ENCODE measurements at regions of chr6 and their contacts with region 1.

Region 1: GRCh38 chr6:149934249-149935156 is 7.3 kb upstream of the ULBP2 start:
- DNase-seq: peak; percentile 87
- H3K4me3 ChIP-seq: no peak overlapping the region
- H3K27ac ChIP-seq: no peak overlapping the region
- H3K4me1 ChIP-seq: no peaks in the 10 kb centered on the region
- H3K27me3 ChIP-seq: peaks cover 37% of the 10 kb centered on the region
- CTCF ChIP-seq: peak; percentile 82

Region 2: GRCh38 chr6:150016324-150017185 is 82.1 kb after region 1 on chr6:
- CTCF ChIA-PET with region 1: interaction called, 3 read pairs
- POLR2A ChIA-PET with region 1: no interaction called
- intact Hi-C with region 1: loop called (anchors 1 kb)
- DNase-seq: peak; percentile 82
- H3K4me3 ChIP-seq: no peak overlapping the region
- H3K27ac ChIP-seq: no peak overlapping the region
- H3K4me1 ChIP-seq: no peaks in the 10 kb centered on the region
- H3K27me3 ChIP-seq: peaks cover 54% of the 10 kb centered on the region
- CTCF ChIP-seq: peak; percentile 60

Region 3: DNA sequence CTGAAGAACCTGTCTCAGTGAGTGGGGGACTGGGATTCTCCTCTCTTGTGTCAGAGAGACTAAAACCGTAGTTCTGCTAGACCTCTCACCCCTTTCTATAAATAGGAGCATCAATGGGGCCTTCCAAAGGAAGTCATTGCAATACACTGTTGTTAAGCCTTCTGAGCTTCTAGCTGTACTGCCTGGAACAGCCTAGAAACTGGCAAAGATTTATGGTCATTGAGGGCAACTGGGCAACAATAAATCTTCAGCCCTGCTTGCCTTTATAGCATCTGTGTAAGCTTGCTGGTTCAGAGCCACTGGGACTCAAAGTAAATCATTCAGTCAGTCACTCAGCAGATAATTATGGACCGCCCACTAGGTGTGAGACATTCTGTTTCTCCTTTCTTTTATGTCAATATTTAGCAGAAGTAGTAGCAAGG is 261.5 kb after region 1 on chr6:
- CTCF ChIA-PET with region 1: no interaction called
- POLR2A ChIA-PET with region 1: no interaction called
- intact Hi-C with region 1: no loop called
- DNase-seq: no peak
- H3K4me3 ChIP-seq: no peak overlapping the region
- H3K27ac ChIP-seq: no peak overlapping the region
- H3K4me1 ChIP-seq: no peaks in the 10 kb centered on the region
- H3K27me3 ChIP-seq: no peaks in the 10 kb centered on the region
- CTCF ChIP-seq: no peak

Region 4: GRCh38 chr6:150320442-150320841 is 385.9 kb after region 1 on chr6:
- CTCF ChIA-PET with region 1: no interaction called
- POLR2A ChIA-PET with region 1: no interaction called
- intact Hi-C with region 1: no loop called
- DNase-seq: no peak
- H3K4me3 ChIP-seq: no peak overlapping the region
- H3K27ac ChIP-seq: no peak overlapping the region
- H3K4me1 ChIP-seq: no peaks in the 10 kb centered on the region
- H3K27me3 ChIP-seq: no peaks in the 10 kb centered on the region
- CTCF ChIP-seq: no peak

Region 5: GRCh38 chr6:150334790-150335783 is 400.6 kb after region 1 on chr6:
- CTCF ChIA-PET with region 1: no interaction called
- POLR2A ChIA-PET with region 1: no interaction called
- intact Hi-C with region 1: loop called (anchors 10 kb)
- DNase-seq: peak; percentile 73
- H3K4me3 ChIP-seq: no peak overlapping the region
- H3K27ac ChIP-seq: no peak overlapping the region
- H3K4me1 ChIP-seq: no peaks in the 10 kb centered on the region
- H3K27me3 ChIP-seq: no peaks in the 10 kb centered on the region
- CTCF ChIP-seq: peak; percentile 88

Region 6: DNA sequence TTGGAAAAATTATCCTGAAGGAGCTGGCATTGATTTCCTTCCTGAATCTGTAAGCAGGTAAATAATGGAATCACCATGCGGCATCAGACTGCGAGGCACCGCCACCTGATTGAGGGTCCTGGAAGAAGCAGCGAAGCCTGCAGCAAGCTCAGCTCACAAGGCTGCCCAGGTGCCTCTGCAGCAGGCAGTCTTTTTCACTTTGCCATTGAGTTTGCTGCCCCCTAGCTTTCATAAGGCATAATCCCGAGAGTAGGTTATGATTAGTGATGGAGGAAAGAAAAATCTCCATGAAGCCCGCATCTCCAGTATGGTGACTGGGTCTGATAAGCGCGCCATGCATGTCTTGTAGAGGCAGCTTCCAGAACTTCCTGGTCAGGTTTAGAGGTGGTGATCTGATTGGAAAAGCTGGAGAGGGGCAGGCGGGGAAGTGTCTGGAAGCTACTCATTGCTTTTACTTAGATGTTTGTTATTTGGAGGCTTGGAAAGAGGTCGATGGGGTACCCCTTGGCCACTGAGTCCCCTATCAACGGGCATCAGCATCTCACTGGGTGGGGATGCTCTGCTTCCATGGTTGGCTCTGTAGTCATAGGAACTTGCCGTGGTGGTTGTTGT is 461.0 kb after region 1 on chr6:
- CTCF ChIA-PET with region 1: no interaction called
- POLR2A ChIA-PET with region 1: no interaction called
- intact Hi-C with region 1: loop called (anchors 10 kb)
- DNase-seq: peak; percentile 82
- H3K4me3 ChIP-seq: no peak overlapping the region
- H3K27ac ChIP-seq: no peak overlapping the region
- H3K4me1 ChIP-seq: no peaks in the 10 kb centered on the region
- H3K27me3 ChIP-seq: no peaks in the 10 kb centered on the region
- CTCF ChIP-seq: peak; percentile 77

Measured in A673 (cell line).